ENCODE measurements at regions of chr6 and their contacts with region 1.

Region 1: GRCh38 chr6:87929843-87930288 is 117.8 kb upstream of the SPACA1 start:
- DNase-seq: peak; percentile 67
- H3K4me3 ChIP-seq: no peak overlapping the region
- H3K27ac ChIP-seq: no peak overlapping the region
- H3K4me1 ChIP-seq: no peaks in the 10 kb centered on the region
- H3K27me3 ChIP-seq: peaks cover 3% of the 10 kb centered on the region
- CTCF ChIP-seq: peak; percentile 97 to 99

Region 2: GRCh38 chr6:87322304-87323212 is 607.3 kb before region 1 on chr6 and contains the start of gene SMIM8:
- CTCF ChIA-PET with region 1: no interaction called
- dilution Hi-C with region 1: no loop called
- in situ Hi-C with region 1: no loop called
- intact Hi-C with region 1: no loop called
- DNase-seq: peak; percentile 81
- H3K4me3 ChIP-seq: peak within 1 kb of the TSS; percentile 81 to 96 (median 91)
- H3K27ac ChIP-seq: peak within 1 kb of the TSS; percentile 67
- H3K4me1 ChIP-seq: no peaks in the 10 kb centered on the region
- H3K27me3 ChIP-seq: no peaks in the 10 kb centered on the region
- CTCF ChIP-seq: peak; percentile 85 to 98
- total RNA-seq, gene SMIM8: 6.9 to 8.7 TPM

Region 3: DNA sequence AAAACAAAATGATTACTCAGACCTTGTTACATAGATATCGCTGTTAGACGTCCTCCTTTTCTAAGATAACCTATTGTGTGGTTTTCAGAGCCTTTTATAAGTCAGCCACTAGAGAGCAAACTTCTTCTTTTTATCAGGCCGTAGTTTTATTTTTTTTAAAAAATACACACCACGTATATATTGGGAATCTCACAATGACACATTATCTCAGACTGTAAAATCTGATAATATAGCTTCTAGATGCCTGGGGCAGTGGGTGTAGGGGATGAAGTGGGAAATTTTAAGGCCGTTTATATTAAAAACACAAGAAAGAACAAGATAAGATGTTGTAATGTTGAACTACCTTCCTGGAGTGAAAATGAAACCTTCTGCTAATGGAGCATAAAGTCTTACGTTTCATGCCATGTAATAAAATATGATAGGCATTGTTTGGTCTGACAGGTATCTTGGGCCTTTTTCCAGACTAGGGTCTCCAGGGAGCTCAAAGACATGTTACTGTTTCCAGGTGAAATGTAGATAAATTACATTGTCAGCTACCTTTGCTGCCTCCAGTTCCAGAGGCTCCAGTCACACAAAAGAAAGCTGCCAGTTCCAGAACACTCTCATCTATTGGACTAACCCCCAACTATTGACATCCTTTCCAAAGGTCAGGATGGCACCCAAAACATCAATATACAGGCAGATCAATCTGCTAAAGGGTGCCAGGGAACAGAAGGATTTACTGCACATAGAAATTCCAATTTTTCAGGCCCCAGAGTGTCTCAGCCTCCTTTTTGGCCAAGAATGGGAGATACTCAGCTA is 97.6 kb before region 1 on chr6:
- CTCF ChIA-PET with region 1: no interaction called
- dilution Hi-C with region 1: no loop called
- in situ Hi-C with region 1: no loop called
- intact Hi-C with region 1: loop called (anchors 5 kb)
- DNase-seq: peak; percentile 33
- H3K4me3 ChIP-seq: peak overlapping the region; percentile 37 to 46 (median 44)
- H3K27ac ChIP-seq: peak overlapping the region; percentile 29
- H3K4me1 ChIP-seq: peaks cover 5% of the 10 kb centered on the region
- H3K27me3 ChIP-seq: no peaks in the 10 kb centered on the region
- CTCF ChIP-seq: peak; percentile 43 to 55

Region 4: GRCh38 chr6:87951751-87952150 is 21.9 kb after region 1 on chr6:
- CTCF ChIA-PET with region 1: no interaction called
- dilution Hi-C with region 1: no loop called
- in situ Hi-C with region 1: no loop called
- intact Hi-C with region 1: no loop called
- DNase-seq: no peak
- H3K4me3 ChIP-seq: no peak overlapping the region
- H3K27ac ChIP-seq: no peak overlapping the region
- H3K4me1 ChIP-seq: no peaks in the 10 kb centered on the region
- H3K27me3 ChIP-seq: peaks cover 5% of the 10 kb centered on the region
- CTCF ChIP-seq: no peak

Region 5: DNA sequence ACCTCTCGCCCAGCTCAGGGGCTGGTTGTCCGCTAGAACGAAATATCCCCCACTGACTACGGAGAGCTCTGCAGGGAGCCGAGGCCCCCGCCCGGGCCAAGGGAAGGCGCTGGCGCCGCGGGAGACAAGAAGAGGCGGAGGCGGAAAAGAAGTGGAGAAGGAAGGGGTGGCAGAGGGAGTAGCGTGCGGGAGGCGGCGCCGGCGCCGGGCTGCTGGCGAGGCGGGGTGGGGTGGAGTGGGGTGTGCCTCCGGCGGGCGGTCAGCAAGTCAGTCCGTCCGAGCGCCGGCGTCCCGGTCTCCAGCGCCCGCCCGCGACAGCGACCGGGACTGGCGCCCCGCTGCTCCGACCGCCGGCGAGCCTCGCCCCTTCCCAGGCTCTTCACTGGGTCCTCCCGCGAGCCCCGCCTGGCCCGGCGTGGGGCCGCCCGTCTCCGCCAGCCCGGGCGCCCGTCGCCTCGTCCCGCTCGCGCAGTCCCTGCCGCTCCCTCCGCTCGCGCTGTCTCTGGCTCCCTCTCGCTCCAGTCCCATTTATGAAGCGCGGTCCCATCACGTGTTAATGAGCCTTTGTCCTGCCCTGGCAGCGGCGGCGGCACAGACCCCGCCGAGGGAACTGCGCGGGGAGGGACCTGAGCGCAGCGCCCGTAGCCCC is 236.1 kb after region 1 on chr6 and contains the start of gene CNR1:
- CTCF ChIA-PET with region 1: no interaction called
- dilution Hi-C with region 1: no loop called
- in situ Hi-C with region 1: no loop called
- intact Hi-C with region 1: loop called (anchors 1 kb)
- DNase-seq: peak; percentile 10
- H3K4me3 ChIP-seq: peak within 1 kb of the TSS; percentile 12 to 40 (median 37)
- H3K27ac ChIP-seq: no peak within 1 kb of the TSS
- H3K4me1 ChIP-seq: peaks cover 17% of the 10 kb centered on the region
- H3K27me3 ChIP-seq: peaks cover 37% of the 10 kb centered on the region
- CTCF ChIP-seq: no peak
- total RNA-seq, gene CNR1: not detected

Region 6: DNA sequence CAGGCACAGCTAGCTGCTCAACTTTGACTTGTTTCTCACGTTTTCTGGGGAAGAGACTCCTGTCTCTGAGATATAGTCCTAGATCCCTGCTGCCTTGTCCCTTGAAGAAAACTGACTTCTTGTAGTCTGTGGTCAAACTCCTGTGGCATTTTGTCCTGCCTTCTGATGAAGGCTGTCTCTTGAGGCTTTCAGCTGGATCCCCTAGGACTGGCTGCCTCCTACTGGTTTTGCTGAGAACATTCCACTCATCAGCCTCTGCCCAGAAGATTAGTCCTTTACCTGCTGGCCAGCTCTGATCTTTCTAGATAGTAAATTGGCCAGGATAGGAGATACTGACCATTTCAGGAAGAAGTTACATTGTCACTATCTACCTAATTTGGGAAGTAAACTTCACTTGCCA is 308.2 kb after region 1 on chr6:
- CTCF ChIA-PET with region 1: no interaction called
- dilution Hi-C with region 1: no loop called
- in situ Hi-C with region 1: no loop called
- intact Hi-C with region 1: loop called (anchors 1 kb)
- DNase-seq: peak; percentile 8
- H3K4me3 ChIP-seq: no peak overlapping the region
- H3K27ac ChIP-seq: no peak overlapping the region
- H3K4me1 ChIP-seq: no peaks in the 10 kb centered on the region
- H3K27me3 ChIP-seq: no peaks in the 10 kb centered on the region
- CTCF ChIP-seq: peak; percentile 36 to 58

Region 7: DNA sequence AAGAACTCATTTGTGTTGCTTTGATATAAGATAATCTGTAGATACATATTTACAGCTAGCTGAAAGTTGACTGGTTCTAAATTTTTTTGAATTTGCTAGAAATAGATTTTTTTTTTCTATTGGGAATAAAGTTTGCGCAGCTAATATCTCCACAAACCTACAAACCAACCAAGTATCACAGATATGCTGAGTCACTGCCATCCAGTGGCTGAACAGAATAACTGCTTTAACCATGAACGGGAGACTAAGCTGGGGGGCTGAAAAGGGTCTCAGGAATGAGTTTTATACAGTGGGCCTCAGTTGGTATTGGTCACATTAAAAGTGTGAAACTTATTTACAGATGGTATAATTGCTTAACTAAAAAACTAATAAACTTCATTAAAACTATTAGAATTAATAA is 563.0 kb after region 1 on chr6:
- CTCF ChIA-PET with region 1: no interaction called
- dilution Hi-C with region 1: no loop called
- in situ Hi-C with region 1: loop called in 1 of 2 experiments (anchors 25 kb)
- intact Hi-C with region 1: loop called (anchors 2 kb)
- DNase-seq: no peak
- H3K4me3 ChIP-seq: no peak overlapping the region
- H3K27ac ChIP-seq: no peak overlapping the region
- H3K4me1 ChIP-seq: no peaks in the 10 kb centered on the region
- H3K27me3 ChIP-seq: no peaks in the 10 kb centered on the region
- CTCF ChIP-seq: peak; percentile 18 to 61

Region 8: DNA sequence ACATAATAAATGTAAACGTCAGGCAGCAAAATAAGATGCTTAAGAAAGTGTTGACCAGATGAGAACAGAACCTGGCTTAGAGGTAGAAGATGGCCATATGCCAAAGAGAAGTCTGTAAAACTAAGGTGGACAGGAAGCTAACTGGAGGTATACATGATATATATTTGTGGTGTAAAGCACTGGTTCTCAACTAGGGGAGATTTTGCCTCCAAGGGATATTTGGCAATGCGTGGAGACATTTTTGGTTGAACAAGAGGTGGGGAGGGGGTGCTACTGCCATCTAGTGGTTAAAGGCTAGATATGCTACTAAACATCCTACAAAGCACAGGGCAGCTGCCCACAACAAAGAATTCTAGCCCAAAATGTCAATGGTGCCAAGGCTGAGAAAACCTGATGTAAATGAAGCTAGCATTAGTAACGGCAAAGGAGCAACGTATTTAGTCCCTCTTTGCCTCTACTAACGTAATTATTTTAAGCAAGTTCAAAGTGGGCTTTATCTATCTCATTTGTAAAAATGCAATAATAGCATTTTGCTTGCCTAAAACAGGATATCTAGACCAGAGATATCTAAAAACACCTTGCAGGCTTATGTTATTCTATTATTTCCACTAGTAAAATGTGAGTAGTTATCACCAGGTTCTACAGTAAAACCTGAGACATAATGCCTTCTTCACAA is 851.0 kb after region 1 on chr6:
- CTCF ChIA-PET with region 1: no interaction called
- dilution Hi-C with region 1: no loop called
- in situ Hi-C with region 1: no loop called
- intact Hi-C with region 1: loop called (anchors 1 kb)
- DNase-seq: peak; percentile 56
- H3K4me3 ChIP-seq: no peak overlapping the region
- H3K27ac ChIP-seq: no peak overlapping the region
- H3K4me1 ChIP-seq: no peaks in the 10 kb centered on the region
- H3K27me3 ChIP-seq: no peaks in the 10 kb centered on the region
- CTCF ChIP-seq: peak; percentile 63 to 89

Region 9: DNA sequence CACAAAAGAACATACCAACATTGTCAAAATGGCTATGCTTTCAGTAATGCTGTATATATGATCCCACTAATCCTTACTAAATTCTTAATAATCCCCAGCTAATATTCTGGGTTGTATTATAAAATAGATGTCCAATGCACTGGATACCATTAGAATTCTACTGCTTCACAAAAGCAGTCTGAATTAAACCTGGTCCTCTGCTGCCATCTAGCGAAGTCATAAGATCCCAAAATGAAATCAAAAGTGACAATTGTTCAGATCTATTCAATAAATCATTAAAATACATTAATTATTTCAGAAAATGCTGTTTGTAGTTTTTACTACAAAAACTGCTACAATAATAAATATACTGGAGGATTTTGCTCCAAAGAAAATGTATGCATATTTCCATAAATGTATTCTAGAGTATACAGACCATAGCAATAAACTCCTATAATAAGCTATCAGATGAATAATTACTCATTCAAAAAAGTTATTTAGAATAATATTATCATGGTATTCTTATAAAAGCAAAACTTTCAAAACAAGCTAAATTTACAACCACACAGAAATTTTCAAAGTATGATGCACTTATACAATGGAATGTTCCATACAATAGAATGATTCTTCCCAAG is 941.0 kb after region 1 on chr6:
- CTCF ChIA-PET with region 1: no interaction called
- dilution Hi-C with region 1: no loop called
- in situ Hi-C with region 1: loop called (anchors 25 kb)
- intact Hi-C with region 1: loop called (anchors 2 kb)
- DNase-seq: peak; percentile 37
- H3K4me3 ChIP-seq: no peak overlapping the region
- H3K27ac ChIP-seq: no peak overlapping the region
- H3K4me1 ChIP-seq: peaks cover 8% of the 10 kb centered on the region
- H3K27me3 ChIP-seq: no peaks in the 10 kb centered on the region
- CTCF ChIP-seq: peak; percentile 49 to 59